A673 (cell line): ENCODE measurements at regions of chr11 and their contacts with region 1.

Region 1: DNA sequence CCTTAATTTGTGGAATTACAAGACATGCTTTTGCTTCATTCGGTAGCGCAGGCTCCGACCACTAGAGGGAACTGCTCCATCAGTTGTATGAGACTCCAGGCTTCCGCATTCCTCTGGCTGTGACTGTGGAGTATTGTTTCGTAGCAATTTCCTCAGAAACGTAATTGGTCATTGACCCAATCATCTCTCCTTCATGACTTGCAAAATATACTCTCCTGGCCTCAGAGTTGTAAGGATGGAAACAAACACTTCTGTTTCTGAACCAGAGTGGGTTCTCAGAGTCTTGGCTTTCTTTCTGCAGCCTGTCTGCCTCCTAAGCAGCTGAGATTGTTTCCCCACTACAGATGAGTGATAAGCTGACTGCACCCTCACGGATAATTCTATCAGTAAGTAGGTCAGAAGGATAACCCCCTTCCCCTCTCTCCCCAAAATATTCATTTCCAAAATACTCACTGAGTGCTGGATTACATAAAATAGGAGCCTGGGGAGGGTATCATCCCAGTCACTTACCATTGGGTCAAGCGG is 146.8 kb upstream of the ZC3H12C start:
- DNase-seq: peak; percentile 97
- H3K4me3 ChIP-seq: peak overlapping the region; percentile 28
- H3K27ac ChIP-seq: peak overlapping the region; percentile 89
- H3K4me1 ChIP-seq: peaks cover 18% of the 10 kb centered on the region
- H3K27me3 ChIP-seq: no peaks in the 10 kb centered on the region
- CTCF ChIP-seq: peak; percentile 100

Region 2: DNA sequence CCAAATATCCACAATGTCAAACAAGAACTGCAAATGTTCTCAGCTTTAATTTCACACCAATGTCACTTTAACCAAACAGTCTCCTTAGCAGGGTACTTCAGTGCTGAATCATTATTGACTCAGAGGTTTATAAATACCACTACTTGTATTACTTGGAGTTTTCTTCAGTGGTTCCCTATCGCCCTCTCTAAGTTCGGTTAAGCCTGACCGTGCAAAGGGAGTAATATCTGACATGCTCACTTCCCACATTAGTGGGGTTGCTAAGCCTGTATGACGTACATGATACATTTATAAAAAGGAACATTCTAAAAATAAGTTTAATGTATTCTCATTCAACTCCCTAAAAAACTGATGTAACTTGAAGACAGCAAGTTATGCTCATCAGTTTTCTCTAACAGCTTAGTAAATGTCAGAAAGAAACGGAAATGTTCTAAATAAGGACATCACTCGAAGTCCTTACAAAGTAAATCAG is 53.7 kb after region 1 on chr11:
- CTCF ChIA-PET with region 1: no interaction called
- POLR2A ChIA-PET with region 1: no interaction called
- intact Hi-C with region 1: no loop called
- DNase-seq: peak; percentile 77
- H3K4me3 ChIP-seq: no peak overlapping the region
- H3K27ac ChIP-seq: peak overlapping the region; percentile 83
- H3K4me1 ChIP-seq: peaks cover 46% of the 10 kb centered on the region
- H3K27me3 ChIP-seq: no peaks in the 10 kb centered on the region
- CTCF ChIP-seq: no peak

Region 3: DNA sequence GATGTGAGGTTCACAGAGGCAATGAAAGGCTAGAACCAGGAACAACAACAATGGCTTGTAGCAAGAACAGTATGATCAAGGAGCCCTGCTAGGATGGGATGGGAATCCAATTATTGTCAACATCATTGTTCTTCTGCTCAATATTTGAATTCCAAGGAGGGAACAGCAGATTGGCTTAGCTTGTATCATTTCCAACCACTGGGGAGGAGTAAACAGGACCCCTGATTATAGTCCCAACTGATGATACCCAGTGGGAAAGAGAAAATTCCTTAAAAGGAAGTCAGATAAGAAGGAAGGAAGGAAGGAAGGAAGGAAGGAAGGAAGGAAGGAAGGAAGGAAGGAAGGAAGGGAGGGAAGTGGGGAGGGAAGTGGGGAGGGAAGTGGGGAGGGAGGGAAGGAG is 77.3 kb after region 1 on chr11:
- CTCF ChIA-PET with region 1: no interaction called
- POLR2A ChIA-PET with region 1: interaction called, 7 read pairs
- intact Hi-C with region 1: loop called (anchors 1 kb)
- DNase-seq: peak; percentile 89
- H3K4me3 ChIP-seq: no peak overlapping the region
- H3K27ac ChIP-seq: peak overlapping the region; percentile 72
- H3K4me1 ChIP-seq: peaks cover 31% of the 10 kb centered on the region
- H3K27me3 ChIP-seq: no peaks in the 10 kb centered on the region
- CTCF ChIP-seq: no peak

Region 4: GRCh38 chr11:110098645-110099044 is 152.3 kb after region 1 on chr11:
- CTCF ChIA-PET with region 1: no interaction called
- POLR2A ChIA-PET with region 1: no interaction called
- intact Hi-C with region 1: loop called (anchors 1 kb)
- DNase-seq: peak; percentile 60
- H3K4me3 ChIP-seq: no peak overlapping the region
- H3K27ac ChIP-seq: peak overlapping the region; percentile 18
- H3K4me1 ChIP-seq: peaks cover 59% of the 10 kb centered on the region
- H3K27me3 ChIP-seq: no peaks in the 10 kb centered on the region
- CTCF ChIP-seq: peak; percentile 39; the same call in 1 of the 2 replicates

Region 5: GRCh38 chr11:110173811-110174644 is 227.6 kb after region 1 on chr11:
- CTCF ChIA-PET with region 1: no interaction called
- POLR2A ChIA-PET with region 1: no interaction called
- intact Hi-C with region 1: loop called (anchors 2 kb)
- DNase-seq: peak; percentile 87
- H3K4me3 ChIP-seq: peak overlapping the region; percentile 9
- H3K27ac ChIP-seq: no peak overlapping the region
- H3K4me1 ChIP-seq: peaks cover 45% of the 10 kb centered on the region
- H3K27me3 ChIP-seq: no peaks in the 10 kb centered on the region
- CTCF ChIP-seq: peak; percentile 98

Region 6: DNA sequence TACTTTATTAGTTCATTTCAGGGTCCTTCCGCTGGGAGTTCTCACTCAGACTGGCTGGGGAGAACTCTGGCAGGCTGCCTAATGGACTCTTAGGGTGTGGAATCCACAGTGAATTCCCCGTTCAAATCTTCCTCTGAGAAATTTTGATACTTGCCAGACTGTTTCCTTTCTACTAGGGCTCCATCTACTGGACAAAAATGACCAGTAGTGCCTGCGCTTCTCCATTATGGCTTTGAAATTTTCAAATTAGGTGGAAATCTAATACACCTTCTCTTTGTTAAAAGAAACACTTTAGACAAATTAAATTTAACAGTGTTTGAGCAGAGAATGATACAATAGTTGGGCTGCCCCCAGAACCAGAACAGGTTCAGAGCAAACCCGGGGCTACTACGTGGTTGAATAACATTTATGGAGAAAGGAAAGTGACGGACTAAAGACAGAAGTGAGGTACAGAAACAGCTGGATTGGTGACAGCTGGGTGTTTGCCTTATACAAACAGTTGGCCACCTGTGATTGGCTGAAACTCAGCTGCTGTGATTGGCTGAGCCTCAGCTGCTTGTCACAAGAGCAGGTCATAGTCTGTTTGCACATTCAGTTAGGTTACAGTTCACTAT is 430.4 kb after region 1 on chr11:
- CTCF ChIA-PET with region 1: no interaction called
- POLR2A ChIA-PET with region 1: no interaction called
- intact Hi-C with region 1: loop called (anchors 2 kb)
- DNase-seq: peak; percentile 100
- H3K4me3 ChIP-seq: peak overlapping the region; percentile 11
- H3K27ac ChIP-seq: peak overlapping the region; percentile 83
- H3K4me1 ChIP-seq: peaks cover 59% of the 10 kb centered on the region
- H3K27me3 ChIP-seq: no peaks in the 10 kb centered on the region
- CTCF ChIP-seq: peak; percentile 98

Region 7: GRCh38 chr11:110497231-110497978 is 551.0 kb after region 1 on chr11:
- CTCF ChIA-PET with region 1: no interaction called
- POLR2A ChIA-PET with region 1: no interaction called
- intact Hi-C with region 1: no loop called
- DNase-seq: peak; percentile 31
- H3K4me3 ChIP-seq: no peak overlapping the region
- H3K27ac ChIP-seq: no peak overlapping the region
- H3K4me1 ChIP-seq: peaks cover 8% of the 10 kb centered on the region
- H3K27me3 ChIP-seq: no peaks in the 10 kb centered on the region
- CTCF ChIP-seq: no peak